ENCODE measurements at regions of chr19 and their contacts with region 1.

Region 1: GRCh38 chr19:49983645-49984229 is 22.8 kb upstream of the SIGLEC11 start:
- DNase-seq: peak; percentile 57 to 70
- ATAC-seq: peak; percentile 55 to 84; a peak in 5 of 6 replicates
- H3K4me3 ChIP-seq: no peak overlapping the region
- H3K27ac ChIP-seq: no peak overlapping the region
- H3K4me1 ChIP-seq: no peaks in the 10 kb centered on the region
- CTCF ChIP-seq: peak; percentile 92
- EP300 ChIP-seq: no peak
- POLR2A ChIP-seq: no peak
- RAD21 ChIP-seq: peak; percentile 73 to 88

Region 2: GRCh38 chr19:49954079-49954829 is 29.5 kb before region 1 on chr19:
- CTCF ChIA-PET with region 1: interaction called, 33 read pairs
- POLR2A ChIA-PET with region 1: no interaction called
- DNase-seq: no peak
- ATAC-seq: no peak
- H3K4me3 ChIP-seq: no peak overlapping the region
- H3K27ac ChIP-seq: no peak overlapping the region
- H3K4me1 ChIP-seq: no peaks in the 10 kb centered on the region
- CTCF ChIP-seq: no peak
- EP300 ChIP-seq: no peak
- POLR2A ChIP-seq: no peak
- RAD21 ChIP-seq: no peak

Region 3: GRCh38 chr19:50003810-50004419 is 20.2 kb after region 1 on chr19:
- CTCF ChIA-PET with region 1: interaction called, 24 read pairs
- POLR2A ChIA-PET with region 1: no interaction called
- DNase-seq: peak; percentile 86 to 93
- ATAC-seq: peak; percentile 87 to 93
- H3K4me3 ChIP-seq: no peak overlapping the region
- H3K27ac ChIP-seq: peak overlapping the region; percentile 59 to 82; a peak in 5 of 6 replicates
- H3K4me1 ChIP-seq: peaks cover 17% of the 10 kb centered on the region
- CTCF ChIP-seq: no peak
- EP300 ChIP-seq: no peak
- POLR2A ChIP-seq: no peak
- RAD21 ChIP-seq: no peak

Region 4: GRCh38 chr19:50016225-50016807 is 32.6 kb after region 1 on chr19:
- CTCF ChIA-PET with region 1: interaction called, 18 read pairs
- POLR2A ChIA-PET with region 1: no interaction called
- DNase-seq: no peak
- ATAC-seq: no peak
- H3K4me3 ChIP-seq: no peak overlapping the region
- H3K27ac ChIP-seq: no peak overlapping the region
- H3K4me1 ChIP-seq: peaks cover 10% of the 10 kb centered on the region; the same call in 2 of the 3 replicates
- CTCF ChIP-seq: no peak
- EP300 ChIP-seq: no peak
- POLR2A ChIP-seq: no peak
- RAD21 ChIP-seq: no peak